ENCODE measurements at regions of chr5 and their contacts with region 1.

Region 1: GRCh38 chr5:43313035-43313853 is at the start of gene HMGCS1:
- DNase-seq: peak; percentile 99
- H3K4me3 ChIP-seq: peak within 1 kb of the TSS; percentile 94
- H3K27ac ChIP-seq: peak within 1 kb of the TSS; percentile 80
- H3K4me1 ChIP-seq: peaks cover 46% of the 10 kb centered on the region
- CTCF ChIP-seq: no peak; the same call in 1 of the 2 replicates
- total RNA-seq, gene HMGCS1: 59.5 and 66.9 TPM in 2 replicates

Region 2: DNA sequence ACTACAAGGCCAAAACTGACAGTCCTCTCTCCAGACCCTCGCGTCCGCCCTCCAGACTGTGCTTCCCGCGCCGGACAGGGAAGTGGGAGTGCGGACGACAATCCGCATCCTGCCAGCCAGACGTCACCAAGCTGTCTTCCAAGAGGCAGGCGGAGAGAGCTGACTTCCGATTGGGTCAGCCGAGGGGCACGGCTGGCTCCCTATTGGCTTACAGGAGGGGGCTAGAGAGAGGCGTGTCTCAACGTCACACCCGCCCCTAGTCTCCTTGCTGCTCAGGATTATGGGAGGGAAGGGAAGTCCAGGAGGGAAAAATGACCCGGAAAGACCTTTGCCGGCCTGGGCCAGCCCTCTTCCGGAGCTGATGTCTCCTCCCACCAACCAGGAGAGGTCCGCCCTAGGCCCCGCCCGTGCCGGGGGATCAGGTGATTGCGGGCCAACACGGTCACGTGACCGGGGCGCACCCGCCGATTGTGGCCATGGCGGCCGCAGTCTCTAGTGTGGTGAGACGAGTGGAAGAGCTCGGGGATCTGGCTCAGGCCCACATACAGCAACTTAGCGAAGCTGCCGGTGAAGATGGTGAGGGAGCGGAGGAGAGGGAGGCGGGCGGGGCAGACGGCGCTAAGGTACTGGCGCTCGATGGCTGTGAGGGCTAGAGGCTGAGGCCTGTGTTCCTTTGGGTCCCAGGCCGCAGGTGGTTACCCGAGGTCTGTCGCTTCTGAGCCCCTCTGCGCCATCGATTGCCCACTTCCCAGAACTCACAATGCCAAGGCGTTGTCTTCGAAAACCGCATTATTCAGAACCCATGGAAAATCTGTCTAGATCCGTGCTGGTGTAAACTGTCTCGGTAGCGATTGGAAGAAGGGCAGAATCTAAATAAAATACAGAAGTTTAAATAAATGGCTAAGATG is 1409.1 kb before region 1 on chr5 and contains the start of gene RIMOC1:
- CTCF ChIA-PET with region 1: no interaction called
- POLR2A ChIA-PET with region 1: no interaction called
- intact Hi-C with region 1: loop called (anchors 5 kb)
- DNase-seq: peak; percentile 98
- H3K4me3 ChIP-seq: peak within 1 kb of the TSS; percentile 82
- H3K27ac ChIP-seq: peak within 1 kb of the TSS; percentile 39
- H3K4me1 ChIP-seq: peaks cover 22% of the 10 kb centered on the region
- CTCF ChIP-seq: no peak
- total RNA-seq, gene RIMOC1: 7.9 and 8.5 TPM in 2 replicates

Region 3: GRCh38 chr5:42467981-42468524 is 845.2 kb before region 1 on chr5:
- CTCF ChIA-PET with region 1: no interaction called
- POLR2A ChIA-PET with region 1: no interaction called
- intact Hi-C with region 1: no loop called
- DNase-seq: no peak
- H3K4me3 ChIP-seq: no peak overlapping the region
- H3K27ac ChIP-seq: no peak overlapping the region
- H3K4me1 ChIP-seq: no peaks in the 10 kb centered on the region
- CTCF ChIP-seq: no peak

Region 4: GRCh38 chr5:43019614-43020293 is 293.5 kb before region 1 on chr5:
- CTCF ChIA-PET with region 1: no interaction called
- POLR2A ChIA-PET with region 1: interaction called, 3 read pairs
- intact Hi-C with region 1: loop called (anchors 2 kb)
- DNase-seq: peak; percentile 95
- H3K4me3 ChIP-seq: peak overlapping the region; percentile 76
- H3K27ac ChIP-seq: peak overlapping the region; percentile 93
- H3K4me1 ChIP-seq: peaks cover 40% of the 10 kb centered on the region
- CTCF ChIP-seq: peak; percentile 73

Region 5: GRCh38 chr5:43066799-43067741 is 246.2 kb before region 1 on chr5:
- CTCF ChIA-PET with region 1: no interaction called
- POLR2A ChIA-PET with region 1: interaction called, 4 read pairs
- intact Hi-C with region 1: loop called (anchors 5 kb)
- DNase-seq: peak; percentile 93
- H3K4me3 ChIP-seq: peak overlapping the region; percentile 85
- H3K27ac ChIP-seq: peak overlapping the region; percentile 92
- H3K4me1 ChIP-seq: peaks cover 29% of the 10 kb centered on the region
- CTCF ChIP-seq: no peak

Region 6: GRCh38 chr5:43105369-43106289 is 207.6 kb before region 1 on chr5:
- CTCF ChIA-PET with region 1: interaction called, 3 read pairs
- POLR2A ChIA-PET with region 1: no interaction called
- intact Hi-C with region 1: loop called (anchors 5 kb)
- DNase-seq: peak; percentile 93
- H3K4me3 ChIP-seq: peak overlapping the region; percentile 65
- H3K27ac ChIP-seq: peak overlapping the region; percentile 20
- H3K4me1 ChIP-seq: peaks cover 4% of the 10 kb centered on the region
- CTCF ChIP-seq: peak; percentile 100

Region 7: GRCh38 chr5:43556857-43557542 is 243.8 kb after region 1 on chr5 and contains the start of gene PAIP1:
- CTCF ChIA-PET with region 1: no interaction called
- POLR2A ChIA-PET with region 1: no interaction called
- intact Hi-C with region 1: loop called (anchors 5 kb)
- DNase-seq: peak; percentile 89
- H3K4me3 ChIP-seq: peak within 1 kb of the TSS; percentile 75
- H3K27ac ChIP-seq: peak within 1 kb of the TSS; percentile 77
- H3K4me1 ChIP-seq: peaks cover 35% of the 10 kb centered on the region
- CTCF ChIP-seq: peak; percentile 80
- total RNA-seq, gene PAIP1: 52.8 and 69.2 TPM in 2 replicates